AG04449 (cell line): ENCODE measurements at regions of chr17 and their contacts with region 1.

Region 1: DNA sequence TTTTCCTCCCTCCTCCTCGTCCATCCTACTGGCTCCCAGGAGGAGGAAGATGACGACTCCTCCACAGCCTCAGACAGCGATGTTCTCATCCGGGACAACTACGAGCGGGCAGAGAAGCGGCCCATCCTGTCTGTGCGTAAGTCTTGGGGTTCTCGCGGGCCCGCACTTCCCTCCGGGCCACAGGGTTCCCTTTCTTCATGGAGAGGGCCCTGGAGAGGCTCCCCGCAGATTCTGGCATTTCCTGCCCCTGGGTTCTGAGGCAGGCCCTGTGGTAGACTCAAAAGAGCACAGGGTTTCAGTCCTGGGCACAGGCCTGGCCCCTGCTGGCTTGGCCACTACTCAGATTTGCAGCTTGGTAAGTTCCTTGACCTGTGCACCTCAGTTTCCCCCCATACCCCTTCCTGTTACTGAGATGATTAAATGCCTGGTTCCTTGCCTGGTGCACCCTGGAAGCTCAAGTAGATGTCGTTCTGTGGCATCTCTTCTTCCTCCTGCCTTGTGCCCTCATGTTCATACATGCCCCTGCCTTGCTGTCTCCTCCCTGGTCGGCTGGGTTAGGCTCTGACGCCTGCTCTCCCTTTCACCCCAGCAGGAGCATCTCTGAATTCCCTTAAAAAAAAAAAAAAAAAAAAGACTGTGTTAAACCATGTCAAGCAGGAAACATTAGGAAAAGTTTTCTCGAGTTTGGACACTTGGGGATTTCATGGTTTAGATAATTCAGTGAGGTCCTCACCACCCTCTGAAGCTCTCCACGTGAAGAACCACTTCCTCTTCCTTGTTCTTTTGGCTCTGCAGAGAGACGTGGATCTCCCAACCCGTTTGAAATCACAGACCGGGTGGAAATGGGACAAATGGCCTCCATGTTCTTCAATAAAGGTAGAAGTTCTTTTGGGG is 14.3 kb upstream of the NAT9 start:
- DNase-seq: no peak
- H3K4me3 ChIP-seq: no peak overlapping the region
- CTCF ChIP-seq: no peak

Region 2: GRCh38 chr17:74776044-74776977 is 14.1 kb before region 1 on chr17 and contains the start of gene NAT9:
- CTCF ChIA-PET with region 1: interaction called, 159 read pairs
- POLR2A ChIA-PET with region 1: no interaction called
- DNase-seq: peak; percentile 34
- H3K4me3 ChIP-seq: peak within 1 kb of the TSS; percentile 98
- CTCF ChIP-seq: no peak

Region 3: DNA sequence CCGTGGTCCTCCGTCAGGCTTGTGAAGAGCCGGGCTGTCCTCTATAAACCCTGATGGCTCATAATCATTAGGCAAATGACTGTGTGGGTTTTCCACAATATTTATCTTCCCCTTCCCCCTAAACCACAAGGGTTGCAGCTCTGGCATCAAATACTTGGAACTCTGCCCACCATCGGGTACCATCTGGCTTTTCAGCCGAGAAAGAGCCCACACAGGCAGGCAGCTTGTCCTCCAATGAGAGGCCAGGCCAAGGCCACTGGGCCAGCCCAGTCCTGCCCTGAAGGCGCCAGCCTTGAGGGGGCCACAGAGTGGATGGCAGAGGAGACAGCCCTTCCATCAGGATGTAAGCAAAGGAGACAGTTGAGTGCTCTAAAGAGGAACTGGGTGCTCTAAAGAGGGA is 17.5 kb after region 1 on chr17:
- CTCF ChIA-PET with region 1: interaction called, 100 read pairs
- POLR2A ChIA-PET with region 1: no interaction called
- DNase-seq: no peak
- H3K4me3 ChIP-seq: no peak overlapping the region
- CTCF ChIP-seq: no peak

Region 4: DNA sequence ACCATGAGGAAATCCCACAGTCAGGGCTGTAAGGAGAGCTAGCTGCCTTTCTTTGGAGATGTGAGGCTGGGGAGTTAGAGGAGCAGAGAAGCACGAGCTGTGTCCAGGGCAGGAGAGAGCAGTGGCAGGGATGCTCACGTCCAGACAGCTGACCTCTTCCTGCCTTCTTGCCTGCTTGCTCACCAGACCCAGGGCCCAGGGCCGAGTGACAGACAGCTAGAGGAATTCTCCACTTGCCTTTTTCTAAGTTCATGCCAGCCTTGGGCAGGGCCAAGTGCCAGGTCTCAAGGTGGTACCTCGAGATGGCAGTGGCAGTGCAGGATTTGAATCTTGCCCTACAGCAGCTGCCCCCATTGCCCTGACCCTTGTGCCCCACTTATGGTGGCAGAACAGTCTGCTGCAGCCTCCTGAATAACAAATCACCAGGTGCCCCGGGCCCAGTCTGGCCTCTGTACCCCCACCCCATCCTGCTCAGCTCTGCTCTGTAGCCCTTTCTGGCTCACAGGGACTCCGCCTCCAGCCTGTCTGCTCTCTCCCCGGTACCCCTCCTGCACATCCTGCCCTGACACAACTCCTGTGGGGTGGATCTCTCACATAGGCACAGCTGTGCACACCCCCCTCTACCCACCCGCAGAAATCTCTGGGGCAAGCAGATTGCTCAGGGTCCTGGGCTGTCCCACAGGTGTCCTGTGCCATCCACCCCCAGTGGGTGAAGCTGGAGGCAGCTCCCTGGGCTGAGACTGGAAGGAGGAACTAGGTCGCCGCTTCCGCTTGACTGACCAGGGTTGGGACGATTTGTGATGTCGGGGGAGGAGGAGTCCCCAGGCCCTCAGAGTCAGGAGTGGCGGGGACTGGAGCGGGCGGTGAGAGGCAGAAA is 43.3 kb after region 1 on chr17:
- CTCF ChIA-PET with region 1: interaction called, 25 read pairs
- POLR2A ChIA-PET with region 1: no interaction called
- DNase-seq: peak; percentile 9
- H3K4me3 ChIP-seq: no peak overlapping the region
- CTCF ChIP-seq: no peak